Ascending aorta (tissue), 2 donors: ENCODE measurements at regions of chr17 and their contacts with region 1.

Region 1: DNA sequence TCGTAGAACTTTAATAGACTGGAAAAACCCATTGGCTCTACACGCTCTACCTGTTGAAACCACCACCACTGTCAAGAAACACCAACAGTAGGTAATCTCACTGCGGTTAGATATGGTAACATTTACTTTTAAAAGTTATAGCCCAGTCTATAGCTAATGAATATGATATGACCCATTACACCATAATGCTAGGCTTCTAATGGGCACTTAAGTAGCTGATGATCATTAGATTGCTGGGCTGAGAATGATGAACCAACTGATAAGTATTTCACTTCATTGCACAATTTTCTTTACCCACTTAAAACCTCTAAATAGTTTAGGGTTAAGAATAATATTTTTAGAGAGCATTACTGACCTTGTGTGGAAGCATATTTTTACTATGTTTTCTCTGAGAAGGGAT is 788.9 kb upstream of the CA10 start:
- DNase-seq: no peak
- H3K4me3 ChIP-seq: no peak overlapping the region
- H3K27ac ChIP-seq: no peak overlapping the region
- H3K4me1 ChIP-seq: no peaks in the 10 kb centered on the region
- H3K27me3 ChIP-seq: no peaks in the 10 kb centered on the region
- CTCF ChIP-seq: no peak

Region 2: DNA sequence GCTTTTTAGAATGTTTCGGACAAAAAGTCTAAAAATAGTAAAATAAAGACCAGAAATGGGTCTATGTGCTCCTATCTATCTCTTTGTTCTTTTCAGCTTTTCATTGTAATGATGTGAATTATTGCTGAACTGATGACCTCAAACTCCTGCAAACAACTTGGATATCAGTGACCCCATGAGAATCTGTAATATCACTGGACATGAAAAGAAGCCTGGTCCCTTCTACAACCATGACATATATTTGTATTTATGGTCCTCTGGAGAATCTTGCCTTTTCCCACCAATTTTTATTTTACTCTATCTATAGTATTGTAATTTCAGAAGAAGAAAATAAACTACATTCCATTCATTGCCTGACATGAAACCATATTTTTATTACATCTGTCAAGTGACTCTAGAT is 48.2 kb before region 1 on chr17:
- intact Hi-C with region 1: loop called (anchors 10 kb)
- DNase-seq: no peak
- H3K4me3 ChIP-seq: no peak overlapping the region
- H3K27ac ChIP-seq: no peak overlapping the region
- H3K4me1 ChIP-seq: no peaks in the 10 kb centered on the region
- H3K27me3 ChIP-seq: no peaks in the 10 kb centered on the region
- CTCF ChIP-seq: no peak

Region 3: DNA sequence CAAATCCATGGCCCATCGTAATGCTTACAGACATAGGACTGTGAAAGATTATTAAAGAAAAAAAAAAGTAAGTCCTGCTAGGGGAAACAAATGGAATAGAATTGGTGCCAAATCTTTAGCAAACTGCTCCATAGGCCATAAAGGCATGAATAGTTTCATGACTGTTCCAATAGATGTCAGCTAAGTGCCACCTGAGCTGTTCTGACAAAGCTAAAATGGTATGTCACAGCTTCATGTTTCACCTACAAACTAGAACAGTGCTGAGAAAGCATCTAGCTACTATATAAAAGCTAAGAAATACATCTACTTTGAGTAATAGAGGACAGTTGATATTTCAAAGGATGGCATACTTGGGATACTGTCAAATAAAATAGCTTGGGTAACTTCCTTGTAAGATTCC is 17.3 kb before region 1 on chr17:
- intact Hi-C with region 1: no loop called
- DNase-seq: no peak
- H3K4me3 ChIP-seq: no peak overlapping the region
- H3K27ac ChIP-seq: no peak overlapping the region
- H3K4me1 ChIP-seq: no peaks in the 10 kb centered on the region
- H3K27me3 ChIP-seq: no peaks in the 10 kb centered on the region
- CTCF ChIP-seq: no peak

Region 4: DNA sequence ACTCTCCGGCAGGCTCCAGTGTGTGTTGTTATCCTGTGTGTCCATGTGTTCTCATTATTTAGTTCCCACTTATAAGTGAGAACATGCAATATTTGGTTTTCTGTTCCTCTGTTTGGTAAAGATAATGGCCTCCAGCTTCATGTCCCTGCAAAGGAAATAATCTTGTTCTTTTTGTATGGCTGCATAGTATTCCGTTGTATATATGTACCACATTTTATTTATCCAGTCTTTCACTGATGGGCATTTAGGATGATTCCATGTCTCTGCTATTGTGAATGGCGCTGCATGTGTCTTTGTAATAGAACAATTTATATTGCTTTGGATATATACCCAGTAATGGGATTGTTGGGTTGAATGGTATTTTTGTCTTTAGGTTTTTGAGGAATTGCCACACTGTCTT is 18.4 kb after region 1 on chr17:
- intact Hi-C with region 1: no loop called
- DNase-seq: no peak
- H3K4me3 ChIP-seq: no peak overlapping the region
- H3K27ac ChIP-seq: no peak overlapping the region
- H3K4me1 ChIP-seq: no peaks in the 10 kb centered on the region
- H3K27me3 ChIP-seq: no peaks in the 10 kb centered on the region
- CTCF ChIP-seq: no peak

Region 5: DNA sequence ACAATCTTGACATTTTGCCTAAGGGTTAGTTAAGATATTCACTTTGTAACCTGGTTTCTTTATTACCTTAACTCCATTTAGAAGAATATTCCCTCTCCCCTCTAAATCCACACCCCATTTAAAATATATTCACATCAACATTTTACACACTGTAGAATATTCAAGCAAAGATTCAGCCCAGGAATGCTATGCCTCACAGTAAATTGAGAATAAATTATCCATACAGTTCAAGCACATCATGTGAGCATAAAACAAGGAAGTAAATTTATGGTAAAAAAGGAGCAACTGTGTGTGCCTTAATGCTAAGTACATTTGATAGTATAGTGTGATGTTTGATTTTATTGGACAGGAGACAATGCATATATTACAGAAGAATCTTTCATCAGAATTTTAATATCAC is 68.7 kb after region 1 on chr17:
- intact Hi-C with region 1: no loop called
- DNase-seq: no peak
- H3K4me3 ChIP-seq: no peak overlapping the region
- H3K27ac ChIP-seq: no peak overlapping the region
- H3K4me1 ChIP-seq: no peaks in the 10 kb centered on the region
- H3K27me3 ChIP-seq: no peaks in the 10 kb centered on the region
- CTCF ChIP-seq: no peak